Activated CD4-positive, alpha-beta memory T cell treated with anti-CD3 and anti-CD28 coated beads for 36 hours (primary cell): ENCODE measurements at regions of chr9 and their contacts with region 1.

Region 1: GRCh38 chr9:71768388-71769174 is at the start of gene CEMIP2:
- DNase-seq: peak; percentile 91
- H3K4me3 Mint-ChIP-seq: peak within 1 kb of the TSS; percentile 87
- H3K27ac Mint-ChIP-seq: peak within 1 kb of the TSS; percentile 91
- H3K4me1 Mint-ChIP-seq: peaks cover 29% of the 10 kb centered on the region
- H3K27me3 Mint-ChIP-seq: no peaks in the 10 kb centered on the region
- total RNA-seq, gene CEMIP2: 56.5 to 70.1 TPM

Region 2: DNA sequence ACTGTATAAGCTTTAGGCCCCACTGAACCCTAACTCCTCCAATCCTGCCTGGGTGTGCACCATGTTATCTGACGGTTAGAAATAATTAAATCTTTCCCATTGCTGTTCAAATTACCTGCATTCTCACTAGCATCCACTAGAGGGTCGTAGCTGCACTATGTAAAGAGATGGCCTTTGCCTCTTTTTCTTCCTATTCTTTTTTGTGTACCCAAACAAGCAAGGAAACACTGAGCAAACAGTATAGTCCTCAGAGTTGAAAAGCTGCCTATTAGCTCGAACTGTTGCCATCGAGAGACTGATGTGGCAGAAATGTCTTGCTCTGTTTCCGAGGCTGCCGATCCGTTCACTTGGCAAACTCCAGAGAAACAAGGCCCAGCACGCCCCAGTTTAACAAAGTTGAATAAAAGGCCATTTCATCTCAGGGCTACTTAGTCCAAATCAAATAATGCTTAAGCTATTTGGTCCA is 483.4 kb before region 1 on chr9:
- CTCF ChIA-PET with region 1: interaction called, 5 read pairs
- POLR2A ChIA-PET with region 1: no interaction called
- intact Hi-C with region 1: loop called (anchors 1 kb)
- DNase-seq: peak; percentile 16
- H3K4me3 Mint-ChIP-seq: no peak overlapping the region
- H3K27ac Mint-ChIP-seq: no peak overlapping the region
- H3K4me1 Mint-ChIP-seq: no peaks in the 10 kb centered on the region
- H3K27me3 Mint-ChIP-seq: no peaks in the 10 kb centered on the region

Region 3: DNA sequence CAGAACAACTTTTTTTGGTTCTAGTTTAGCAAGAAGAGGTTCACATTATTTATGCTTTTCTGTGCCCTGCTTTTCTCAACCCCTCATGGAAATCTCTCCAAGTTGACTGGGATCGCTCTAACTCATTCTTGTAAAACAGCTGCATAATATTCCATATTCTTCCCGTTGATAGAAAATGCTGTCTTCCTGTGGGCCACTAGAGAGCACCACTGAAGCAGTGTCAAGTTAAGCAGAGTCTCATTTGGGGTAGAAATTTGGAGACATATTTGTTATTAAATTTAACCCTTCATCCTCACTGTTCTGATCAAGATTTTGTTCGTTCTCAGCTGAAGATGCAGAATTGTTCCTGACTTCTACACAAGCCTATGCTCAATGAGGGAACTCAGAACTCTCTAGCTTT is 140.3 kb before region 1 on chr9:
- CTCF ChIA-PET with region 1: interaction called, 10 read pairs
- POLR2A ChIA-PET with region 1: no interaction called
- intact Hi-C with region 1: loop called (anchors 1 kb)
- DNase-seq: no peak
- H3K4me3 Mint-ChIP-seq: no peak overlapping the region
- H3K27ac Mint-ChIP-seq: no peak overlapping the region
- H3K4me1 Mint-ChIP-seq: no peaks in the 10 kb centered on the region
- H3K27me3 Mint-ChIP-seq: no peaks in the 10 kb centered on the region

Region 4: GRCh38 chr9:71734953-71735352 is 33.6 kb before region 1 on chr9:
- CTCF ChIA-PET with region 1: interaction called, 3 read pairs
- POLR2A ChIA-PET with region 1: interaction called, 4 read pairs
- intact Hi-C with region 1: loop called (anchors 2 kb)
- DNase-seq: no peak
- H3K4me3 Mint-ChIP-seq: no peak overlapping the region
- H3K27ac Mint-ChIP-seq: peak overlapping the region; percentile 44
- H3K4me1 Mint-ChIP-seq: peaks cover 16% of the 10 kb centered on the region
- H3K27me3 Mint-ChIP-seq: no peaks in the 10 kb centered on the region

Region 5: DNA sequence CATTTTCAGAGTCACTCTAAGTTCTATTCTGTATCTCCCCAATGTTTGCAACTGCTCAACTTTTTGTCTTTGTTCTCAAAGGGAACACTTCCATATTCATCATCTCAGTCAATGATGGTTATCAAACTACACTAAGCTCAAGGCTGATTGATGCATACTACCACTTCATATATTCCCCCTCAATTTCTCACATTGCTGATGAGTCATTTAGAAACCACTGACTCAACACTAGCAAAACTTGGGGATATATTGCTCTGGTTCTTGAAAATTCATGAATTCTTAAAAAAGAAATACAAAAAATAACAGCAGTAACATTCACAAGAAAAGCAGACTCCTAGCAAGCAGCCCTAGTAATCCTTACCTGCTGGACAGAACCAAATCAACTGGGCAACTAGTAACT is 90.2 kb after region 1 on chr9:
- CTCF ChIA-PET with region 1: no interaction called
- POLR2A ChIA-PET with region 1: no interaction called
- intact Hi-C with region 1: loop called (anchors 1 kb)
- DNase-seq: no peak
- H3K4me3 Mint-ChIP-seq: no peak overlapping the region
- H3K27ac Mint-ChIP-seq: peak overlapping the region; percentile 0
- H3K4me1 Mint-ChIP-seq: peaks cover 8% of the 10 kb centered on the region
- H3K27me3 Mint-ChIP-seq: no peaks in the 10 kb centered on the region

Region 6: GRCh38 chr9:72623156-72623555 is 854.6 kb after region 1 on chr9:
- CTCF ChIA-PET with region 1: no interaction called
- POLR2A ChIA-PET with region 1: no interaction called
- intact Hi-C with region 1: no loop called
- DNase-seq: no peak
- H3K4me3 Mint-ChIP-seq: no peak overlapping the region
- H3K27ac Mint-ChIP-seq: no peak overlapping the region
- H3K4me1 Mint-ChIP-seq: no peaks in the 10 kb centered on the region
- H3K27me3 Mint-ChIP-seq: no peaks in the 10 kb centered on the region

Region 7: DNA sequence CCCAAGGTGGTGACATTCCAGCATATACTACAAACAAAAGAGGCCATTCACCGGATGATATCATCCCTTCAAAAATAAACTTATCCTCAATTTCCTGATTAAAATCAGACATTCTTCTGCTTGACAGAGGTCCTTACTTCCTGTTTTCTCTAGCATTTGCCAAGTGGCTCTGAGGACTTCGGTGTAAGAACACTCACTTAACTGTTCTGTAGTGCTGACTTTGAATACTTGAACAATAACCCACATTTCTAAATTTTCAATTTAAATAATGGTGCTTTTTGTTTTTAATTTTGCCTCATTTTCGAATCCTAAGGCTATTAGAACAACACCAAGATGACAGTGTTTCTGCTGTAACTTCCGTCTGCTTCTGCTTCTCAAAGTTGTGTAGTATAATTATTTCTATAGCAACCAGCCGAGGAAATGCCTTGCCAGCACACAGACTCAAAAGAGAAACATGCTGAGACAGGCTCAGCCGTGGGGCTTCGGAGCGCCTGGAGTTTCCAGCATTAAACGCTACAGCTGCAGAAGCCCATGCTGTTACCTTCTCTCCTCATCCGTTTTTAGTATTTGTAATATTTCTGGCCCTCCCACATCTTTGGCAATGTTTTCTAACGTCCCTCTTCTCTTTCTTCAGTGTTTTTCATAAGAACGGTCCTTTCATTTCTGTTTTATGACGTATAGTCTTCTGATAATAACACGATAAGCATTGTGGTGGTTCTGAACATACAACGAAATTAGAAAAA is 1363.6 kb after region 1 on chr9:
- CTCF ChIA-PET with region 1: no interaction called
- POLR2A ChIA-PET with region 1: no interaction called
- intact Hi-C with region 1: loop called (anchors 5 kb)
- DNase-seq: peak; percentile 80
- H3K4me3 Mint-ChIP-seq: peak overlapping the region; percentile 78
- H3K27ac Mint-ChIP-seq: peak overlapping the region; percentile 88
- H3K4me1 Mint-ChIP-seq: peaks cover 35% of the 10 kb centered on the region
- H3K27me3 Mint-ChIP-seq: no peaks in the 10 kb centered on the region